ENCODE measurements at regions of chr15 and their contacts with region 1.

Region 1: DNA sequence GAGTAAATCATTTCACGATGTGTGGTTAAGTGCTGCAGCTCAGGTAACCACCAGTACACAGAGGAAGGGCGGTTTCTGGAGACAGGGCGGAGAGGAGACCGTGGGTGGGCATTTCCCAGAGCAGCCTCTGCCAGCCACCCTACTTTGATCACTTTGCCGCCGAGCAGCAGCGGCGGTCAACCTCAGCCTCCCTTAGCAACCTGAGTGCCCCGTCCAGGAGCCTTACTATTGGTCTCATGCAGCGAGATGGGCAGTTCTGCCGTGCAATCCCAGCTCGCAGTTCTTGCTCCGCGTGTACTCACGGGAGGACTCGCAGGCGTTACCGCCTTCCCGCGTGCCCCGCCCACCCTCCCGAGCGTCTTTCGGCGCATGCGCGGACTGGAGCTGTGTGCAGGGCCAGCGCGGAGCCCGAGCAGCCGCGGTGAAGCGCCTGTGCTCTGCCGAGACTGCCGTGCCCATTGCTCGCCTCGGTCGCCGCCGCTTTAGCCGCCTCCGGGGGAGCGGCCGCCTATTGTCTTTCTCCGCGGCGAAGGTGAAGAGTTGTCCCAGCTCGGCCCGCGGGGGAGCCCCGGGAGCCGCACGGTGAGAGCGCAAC is at the start of gene AKAP13:
- DNase-seq: peak; percentile 98
- H3K4me3 Mint-ChIP-seq: peak within 1 kb of the TSS; percentile 85
- H3K27ac Mint-ChIP-seq: peak within 1 kb of the TSS; percentile 90
- H3K4me1 Mint-ChIP-seq: peaks cover 53% of the 10 kb centered on the region
- H3K27me3 Mint-ChIP-seq: no peaks in the 10 kb centered on the region
- total RNA-seq, gene AKAP13: 106 to 113 TPM

Region 2: DNA sequence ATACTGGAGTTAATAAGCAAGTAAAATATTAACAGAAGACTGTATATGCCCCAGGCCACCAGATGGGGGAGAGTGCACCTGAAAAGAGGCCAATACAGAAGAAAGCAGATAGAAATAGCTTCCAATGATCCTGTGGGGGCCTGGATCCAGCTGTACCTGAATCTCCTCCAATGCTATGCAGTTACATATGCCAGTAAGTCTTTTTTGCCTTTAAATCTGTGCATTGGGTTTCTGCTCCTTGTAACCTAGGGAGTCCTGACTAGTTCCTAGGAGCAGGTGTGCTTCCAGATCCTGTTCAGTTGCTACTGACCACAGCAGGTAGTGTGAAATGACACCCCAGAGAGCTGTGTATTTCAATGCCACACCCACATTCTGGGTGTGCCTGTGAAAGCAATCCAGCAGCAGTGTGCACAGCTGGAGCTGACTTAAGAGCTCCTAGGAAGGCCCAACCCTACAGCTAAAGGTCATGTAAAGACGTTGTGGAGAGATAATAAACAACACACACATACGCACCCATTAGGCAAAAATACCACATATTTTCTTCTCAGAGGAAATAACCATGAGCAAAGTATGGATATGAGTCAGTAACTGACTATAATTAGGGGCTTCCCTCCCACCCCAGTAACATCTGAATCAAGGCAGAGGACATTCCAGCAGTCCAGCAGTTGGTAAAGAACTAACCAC is 62.1 kb before region 1 on chr15:
- CTCF ChIA-PET with region 1: interaction called, 4 read pairs
- POLR2A ChIA-PET with region 1: interaction called, 7 read pairs
- intact Hi-C with region 1: loop called (anchors 1 kb)
- DNase-seq: peak; percentile 50
- H3K4me3 Mint-ChIP-seq: no peak overlapping the region
- H3K27ac Mint-ChIP-seq: peak overlapping the region; percentile 28
- H3K4me1 Mint-ChIP-seq: peaks cover 49% of the 10 kb centered on the region
- H3K27me3 Mint-ChIP-seq: no peaks in the 10 kb centered on the region

Region 3: GRCh38 chr15:85354461-85354860 is 25.9 kb before region 1 on chr15:
- CTCF ChIA-PET with region 1: interaction called, 3 read pairs
- POLR2A ChIA-PET with region 1: interaction called, 3 read pairs
- intact Hi-C with region 1: loop called (anchors 1 kb)
- DNase-seq: no peak
- H3K4me3 Mint-ChIP-seq: no peak overlapping the region
- H3K27ac Mint-ChIP-seq: no peak overlapping the region
- H3K4me1 Mint-ChIP-seq: peaks cover 15% of the 10 kb centered on the region
- H3K27me3 Mint-ChIP-seq: no peaks in the 10 kb centered on the region

Region 4: GRCh38 chr15:85402195-85402881 is 22.0 kb after region 1 on chr15:
- CTCF ChIA-PET with region 1: interaction called, 8 read pairs
- POLR2A ChIA-PET with region 1: interaction called, 13 read pairs
- intact Hi-C with region 1: no loop called
- DNase-seq: no peak
- H3K4me3 Mint-ChIP-seq: peak overlapping the region; percentile 1
- H3K27ac Mint-ChIP-seq: peak overlapping the region; percentile 10
- H3K4me1 Mint-ChIP-seq: peaks cover 73% of the 10 kb centered on the region
- H3K27me3 Mint-ChIP-seq: no peaks in the 10 kb centered on the region

Region 5: GRCh38 chr15:85407804-85408746 is 27.8 kb after region 1 on chr15:
- CTCF ChIA-PET with region 1: interaction called, 23 read pairs
- POLR2A ChIA-PET with region 1: interaction called, 19 read pairs
- intact Hi-C with region 1: loop called (anchors 1 kb)
- DNase-seq: peak; percentile 64
- H3K4me3 Mint-ChIP-seq: peak overlapping the region; percentile 53
- H3K27ac Mint-ChIP-seq: peak overlapping the region; percentile 91
- H3K4me1 Mint-ChIP-seq: peaks cover 81% of the 10 kb centered on the region
- H3K27me3 Mint-ChIP-seq: no peaks in the 10 kb centered on the region

Region 6: GRCh38 chr15:85794603-85795336 is 414.5 kb after region 1 on chr15 and contains the start of gene KLHL25:
- CTCF ChIA-PET with region 1: no interaction called
- POLR2A ChIA-PET with region 1: no interaction called
- intact Hi-C with region 1: loop called (anchors 1 kb)
- DNase-seq: peak; percentile 95
- H3K4me3 Mint-ChIP-seq: peak within 1 kb of the TSS; percentile 90
- H3K27ac Mint-ChIP-seq: peak within 1 kb of the TSS; percentile 74
- H3K4me1 Mint-ChIP-seq: peaks cover 32% of the 10 kb centered on the region
- H3K27me3 Mint-ChIP-seq: no peaks in the 10 kb centered on the region
- total RNA-seq, gene KLHL25: 5.3 to 5.7 TPM

Measured in activated CD4-positive, alpha-beta memory T cell treated with anti-CD3 and anti-CD28 coated beads for 36 hours (primary cell).